Thyroid gland (tissue), 4 donors: ENCODE measurements at regions of chr1 and their contacts with region 1.

Region 1: GRCh38 chr1:155244368-155245162 is 10.7 kb downstream of the ENTREP3 start:
- DNase-seq: peak; percentile 98
- H3K4me3 ChIP-seq: peak overlapping the region in 2 of 3 donors; percentile 35 to 37
- H3K27ac ChIP-seq: peak overlapping the region; percentile 80 to 92 (median 81)
- H3K4me1 ChIP-seq: peaks cover 15 to 27% of the 10 kb centered on the region in 2 donors
- H3K27me3 ChIP-seq: no peaks in the 10 kb centered on the region
- CTCF ChIP-seq: peak in 5 of 6 experiments; percentile 58 to 95 (median 89)
- POLR2A ChIP-seq: peak; percentile 54 to 89

Region 2: GRCh38 chr1:155208541-155209311 is 35.8 kb before region 1 on chr1 and contains the start of gene MTX1:
- intact Hi-C with region 1: loop called (anchors 5 kb)
- DNase-seq: peak; percentile 84 to 88
- H3K4me3 ChIP-seq: peak within 1 kb of the TSS; percentile 89 to 98 (median 96)
- H3K27ac ChIP-seq: peak within 1 kb of the TSS; percentile 99 to 100 (median 99)
- H3K4me1 ChIP-seq: peaks cover 23 to 26% of the 10 kb centered on the region in 2 donors
- H3K27me3 ChIP-seq: no peaks in the 10 kb centered on the region
- CTCF ChIP-seq: no peak
- POLR2A ChIP-seq: peak in 1 of 2 donors; percentile 53
- total RNA-seq, gene MTX1: 37.9 to 75.5 (median 52.1) TPM